Caco-2 (cell line): ENCODE measurements at regions of chr15 and their contacts with region 1.

Region 1: DNA sequence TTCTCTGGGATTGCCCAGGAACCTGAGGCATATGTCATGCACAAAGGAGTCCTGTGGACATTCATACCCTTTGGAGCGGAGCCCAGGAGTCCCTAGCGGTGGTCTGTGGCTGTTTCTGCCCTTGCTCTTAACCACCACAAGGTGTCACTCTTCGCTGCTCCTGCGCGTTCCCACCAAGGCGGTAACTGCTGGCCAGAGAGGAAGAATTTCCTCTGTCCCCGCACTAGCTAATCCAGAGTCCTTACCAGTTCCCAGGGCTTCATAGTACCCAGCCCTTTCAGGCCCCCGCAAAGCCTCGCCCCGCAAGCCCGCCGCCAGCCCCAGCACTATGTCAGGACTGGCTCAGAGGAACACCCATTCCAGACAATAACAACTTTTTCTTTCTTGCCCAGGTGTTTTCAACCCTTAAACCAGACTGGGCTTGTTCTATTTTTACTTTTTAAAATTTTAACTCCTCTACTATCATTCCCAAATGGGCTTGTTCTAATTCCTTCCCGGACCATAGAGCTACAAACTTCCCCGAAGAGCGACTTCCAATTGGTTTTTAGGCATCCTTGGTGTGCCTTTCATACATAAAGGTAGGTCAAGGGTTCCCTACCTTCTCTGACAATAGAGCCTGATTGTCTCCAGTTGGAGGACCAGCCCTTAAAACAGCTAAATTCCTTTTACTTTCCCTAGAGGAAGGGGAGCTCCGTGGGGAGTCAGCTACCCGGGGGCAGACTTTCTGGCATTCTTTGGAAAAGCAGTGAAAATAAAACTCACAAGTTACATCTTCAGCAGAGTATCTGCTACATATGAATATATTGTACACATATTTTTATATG is 31.8 kb upstream of the ZNF774 start:
- DNase-seq: peak; percentile 86
- H3K4me3 ChIP-seq: peak overlapping the region; percentile 26
- H3K4me3 Mint-ChIP-seq: peak overlapping the region; percentile 61
- H3K27ac Mint-ChIP-seq: peak overlapping the region; percentile 60
- H3K4me1 ChIP-seq: peaks cover 17% of the 10 kb centered on the region
- H3K4me1 Mint-ChIP-seq: peaks cover 18% of the 10 kb centered on the region
- H3K27me3 ChIP-seq: no peaks in the 10 kb centered on the region
- H3K27me3 Mint-ChIP-seq: no peaks in the 10 kb centered on the region
- CTCF ChIP-seq: peak; percentile 96 to 97

Region 2: DNA sequence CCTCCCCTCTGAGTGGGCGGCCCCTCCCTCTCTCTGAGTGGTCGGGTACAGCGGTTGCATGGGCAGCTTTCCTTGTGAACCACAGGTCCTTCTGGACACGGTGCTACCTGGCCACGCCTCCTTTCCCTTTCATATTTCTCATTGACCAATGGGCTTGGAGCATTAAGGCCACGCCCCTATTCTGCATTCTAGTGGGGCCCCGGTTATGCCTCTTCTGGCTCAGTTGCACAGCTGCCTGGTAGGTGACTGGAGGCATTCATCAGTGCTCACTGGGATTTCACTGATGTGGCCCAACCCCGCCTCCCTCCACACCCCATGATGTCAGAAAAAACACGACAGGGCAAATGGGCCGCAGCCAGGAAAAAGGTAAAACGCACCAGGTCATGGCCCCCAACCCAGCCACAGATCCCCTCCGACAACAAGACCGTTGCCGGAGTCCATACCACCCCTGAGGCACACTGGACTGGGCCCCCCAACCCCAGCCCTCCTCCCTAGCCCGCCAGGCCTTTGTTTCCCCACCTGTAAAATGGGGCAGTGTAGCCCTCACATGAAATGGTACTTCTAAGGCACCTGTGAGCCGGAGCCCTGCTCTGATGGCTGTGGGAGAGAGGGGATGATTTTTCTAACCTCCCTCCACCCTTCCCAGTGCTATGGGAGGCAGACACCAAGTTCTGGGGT is 28.5 kb before region 1 on chr15:
- CTCF ChIA-PET with region 1: interaction called, 16 read pairs
- POLR2A ChIA-PET with region 1: no interaction called
- intact Hi-C with region 1: loop called (anchors 1 kb)
- DNase-seq: peak; percentile 58 to 74
- H3K4me3 ChIP-seq: no peak overlapping the region
- H3K4me3 Mint-ChIP-seq: no peak overlapping the region
- H3K27ac Mint-ChIP-seq: no peak overlapping the region
- H3K4me1 ChIP-seq: peaks cover 4% of the 10 kb centered on the region; the same call in 1 of the 2 replicates
- H3K4me1 Mint-ChIP-seq: peaks cover 7% of the 10 kb centered on the region
- H3K27me3 ChIP-seq: no peaks in the 10 kb centered on the region
- H3K27me3 Mint-ChIP-seq: no peaks in the 10 kb centered on the region
- CTCF ChIP-seq: no peak

Region 3: GRCh38 chr15:90309020-90309419 is 11.3 kb before region 1 on chr15:
- CTCF ChIA-PET with region 1: no interaction called
- POLR2A ChIA-PET with region 1: no interaction called
- intact Hi-C with region 1: no loop called
- DNase-seq: no peak
- H3K4me3 ChIP-seq: no peak overlapping the region
- H3K4me3 Mint-ChIP-seq: no peak overlapping the region
- H3K27ac Mint-ChIP-seq: no peak overlapping the region
- H3K4me1 ChIP-seq: no peaks in the 10 kb centered on the region
- H3K4me1 Mint-ChIP-seq: peaks cover 7% of the 10 kb centered on the region
- H3K27me3 ChIP-seq: no peaks in the 10 kb centered on the region
- H3K27me3 Mint-ChIP-seq: peaks cover 12% of the 10 kb centered on the region
- CTCF ChIP-seq: no peak

Region 4: GRCh38 chr15:90334304-90334731 is 14.0 kb after region 1 on chr15:
- CTCF ChIA-PET with region 1: interaction called, 12 read pairs
- POLR2A ChIA-PET with region 1: interaction called, 10 read pairs
- intact Hi-C with region 1: no loop called
- DNase-seq: peak; percentile 80 to 82
- H3K4me3 ChIP-seq: no peak overlapping the region
- H3K4me3 Mint-ChIP-seq: peak overlapping the region; percentile 59
- H3K27ac Mint-ChIP-seq: peak overlapping the region; percentile 83
- H3K4me1 ChIP-seq: peaks cover 48% of the 10 kb centered on the region
- H3K4me1 Mint-ChIP-seq: peaks cover 24% of the 10 kb centered on the region
- H3K27me3 ChIP-seq: no peaks in the 10 kb centered on the region
- H3K27me3 Mint-ChIP-seq: no peaks in the 10 kb centered on the region
- CTCF ChIP-seq: no peak

Region 5: DNA sequence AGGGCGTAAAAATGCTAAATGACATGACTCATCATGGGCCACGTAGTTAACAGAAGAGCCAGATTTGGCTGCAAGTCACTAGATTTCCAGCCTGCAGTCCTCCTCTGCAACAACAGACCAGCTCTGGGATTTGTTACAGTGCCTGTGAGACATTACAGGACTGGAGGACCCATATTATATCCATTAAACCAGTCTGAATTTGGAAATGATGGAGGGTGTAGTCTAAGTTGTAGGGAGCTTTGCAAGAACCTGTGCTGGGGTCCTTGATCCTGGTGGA is 42.6 kb after region 1 on chr15:
- CTCF ChIA-PET with region 1: interaction called, 11 read pairs
- POLR2A ChIA-PET with region 1: interaction called, 3 read pairs
- intact Hi-C with region 1: loop called (anchors 1 kb)
- DNase-seq: no peak
- H3K4me3 ChIP-seq: no peak overlapping the region
- H3K4me3 Mint-ChIP-seq: no peak overlapping the region
- H3K27ac Mint-ChIP-seq: no peak overlapping the region
- H3K4me1 ChIP-seq: peaks cover 34% of the 10 kb centered on the region
- H3K4me1 Mint-ChIP-seq: peaks cover 20% of the 10 kb centered on the region
- H3K27me3 ChIP-seq: no peaks in the 10 kb centered on the region
- H3K27me3 Mint-ChIP-seq: no peaks in the 10 kb centered on the region
- CTCF ChIP-seq: no peak

Region 6: GRCh38 chr15:90482124-90483011 is 162.1 kb after region 1 on chr15:
- CTCF ChIA-PET with region 1: interaction called, 32 read pairs
- POLR2A ChIA-PET with region 1: no interaction called
- intact Hi-C with region 1: loop called (anchors 1 kb)
- DNase-seq: peak; percentile 50 to 62
- H3K4me3 ChIP-seq: no peak overlapping the region
- H3K4me3 Mint-ChIP-seq: no peak overlapping the region
- H3K27ac Mint-ChIP-seq: no peak overlapping the region
- H3K4me1 ChIP-seq: peaks cover 29% of the 10 kb centered on the region
- H3K4me1 Mint-ChIP-seq: peaks cover 34% of the 10 kb centered on the region
- H3K27me3 ChIP-seq: no peaks in the 10 kb centered on the region
- H3K27me3 Mint-ChIP-seq: no peaks in the 10 kb centered on the region
- CTCF ChIP-seq: peak; percentile 80 to 82

Region 7: GRCh38 chr15:90691982-90692773 is 371.9 kb after region 1 on chr15:
- CTCF ChIA-PET with region 1: no interaction called
- POLR2A ChIA-PET with region 1: no interaction called
- intact Hi-C with region 1: loop called (anchors 1 kb)
- DNase-seq: no peak
- H3K4me3 ChIP-seq: no peak overlapping the region
- H3K4me3 Mint-ChIP-seq: no peak overlapping the region
- H3K27ac Mint-ChIP-seq: no peak overlapping the region
- H3K4me1 ChIP-seq: no peaks in the 10 kb centered on the region
- H3K4me1 Mint-ChIP-seq: no peaks in the 10 kb centered on the region
- H3K27me3 ChIP-seq: no peaks in the 10 kb centered on the region
- H3K27me3 Mint-ChIP-seq: no peaks in the 10 kb centered on the region
- CTCF ChIP-seq: no peak